ENCODE measurements at regions of chr3 and their contacts with region 1.

Region 1: DNA sequence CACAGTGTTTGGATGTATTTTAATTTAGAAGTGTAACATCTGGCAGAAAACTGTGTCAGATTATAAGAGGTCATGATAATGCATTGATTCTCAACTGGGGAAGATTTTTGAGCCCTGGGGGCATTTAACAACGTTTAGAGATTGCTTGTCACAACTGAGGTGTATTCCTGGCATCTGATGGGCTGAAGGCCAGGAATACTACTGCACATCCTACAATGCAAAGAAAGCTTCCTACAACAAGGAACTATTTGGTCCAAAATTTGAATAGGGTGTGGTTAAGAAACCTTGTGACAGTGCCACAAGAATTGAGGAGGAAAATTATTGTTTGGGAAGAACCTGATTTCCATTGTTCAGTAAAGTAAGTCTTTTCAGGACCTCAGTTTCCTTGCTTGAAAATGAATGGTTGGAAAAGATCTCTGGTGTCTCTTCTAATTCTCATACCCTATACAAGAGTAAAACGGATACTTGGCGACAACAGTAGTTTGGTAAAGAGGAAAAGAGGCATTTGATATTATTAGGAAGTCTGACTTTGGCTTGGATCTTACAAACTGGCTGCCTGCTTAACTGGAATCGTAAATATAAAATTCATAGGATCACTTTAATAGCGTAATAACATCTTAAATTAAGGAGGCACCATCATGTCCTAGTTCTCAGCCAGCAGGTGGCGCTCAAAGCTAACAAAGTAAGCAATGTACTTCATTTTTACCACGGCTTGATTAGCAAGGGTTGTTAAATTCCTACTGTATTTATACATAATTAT is 4.3 kb downstream of the DAZL start:
- DNase-seq: peak; percentile 63 to 89
- ATAC-seq: peak; percentile 59

Region 2: GRCh38 chr3:17233398-17233800 is 632.4 kb after region 1 on chr3:
- intact Hi-C with region 1: loop called in 1 of 2 experiments (anchors 5 kb)
- DNase-seq: no peak
- ATAC-seq: peak; percentile 90

Measured in left colon (tissue), 2 donors.